Activated CD4-positive, alpha-beta memory T cell treated with anti-CD3 and anti-CD28 coated beads for 36 hours (primary cell): ENCODE measurements at regions of chr17 and their contacts with region 1.

Region 1: GRCh38 chr17:47649153-47649971 is at the start of gene KPNB1:
- DNase-seq: peak; percentile 100
- H3K4me3 Mint-ChIP-seq: peak within 1 kb of the TSS; percentile 92
- H3K27ac Mint-ChIP-seq: peak within 1 kb of the TSS; percentile 98
- H3K4me1 Mint-ChIP-seq: peaks cover 44% of the 10 kb centered on the region
- H3K27me3 Mint-ChIP-seq: no peaks in the 10 kb centered on the region
- total RNA-seq, gene KPNB1: 475 to 488 TPM

Region 2: DNA sequence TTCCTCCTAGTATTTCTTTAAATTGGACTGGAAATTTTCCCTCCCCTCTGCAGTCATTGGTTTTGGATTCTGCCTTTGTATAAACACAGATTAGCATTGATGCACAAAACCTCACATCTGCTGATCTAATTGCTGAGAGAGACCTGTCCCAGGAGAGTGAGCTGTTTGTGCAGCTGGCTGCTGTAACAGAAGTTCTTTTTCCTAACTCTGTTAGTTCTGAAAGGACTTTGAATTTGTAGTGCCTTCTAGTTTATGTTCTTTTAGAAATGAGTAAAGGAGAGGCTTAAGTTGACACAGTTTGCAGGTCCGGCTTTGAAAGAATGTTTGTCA is 44.8 kb before region 1 on chr17:
- CTCF ChIA-PET with region 1: no interaction called
- POLR2A ChIA-PET with region 1: no interaction called
- intact Hi-C with region 1: no loop called
- DNase-seq: no peak
- H3K4me3 Mint-ChIP-seq: no peak overlapping the region
- H3K27ac Mint-ChIP-seq: no peak overlapping the region
- H3K4me1 Mint-ChIP-seq: peaks cover 2% of the 10 kb centered on the region
- H3K27me3 Mint-ChIP-seq: no peaks in the 10 kb centered on the region

Region 3: GRCh38 chr17:47708863-47709541 is 59.6 kb after region 1 on chr17:
- CTCF ChIA-PET with region 1: interaction called, 3 read pairs
- POLR2A ChIA-PET with region 1: interaction called, 6 read pairs
- intact Hi-C with region 1: loop called (anchors 1 kb)
- DNase-seq: no peak
- H3K4me3 Mint-ChIP-seq: no peak overlapping the region
- H3K27ac Mint-ChIP-seq: no peak overlapping the region
- H3K4me1 Mint-ChIP-seq: peaks cover 62% of the 10 kb centered on the region
- H3K27me3 Mint-ChIP-seq: no peaks in the 10 kb centered on the region

Region 4: DNA sequence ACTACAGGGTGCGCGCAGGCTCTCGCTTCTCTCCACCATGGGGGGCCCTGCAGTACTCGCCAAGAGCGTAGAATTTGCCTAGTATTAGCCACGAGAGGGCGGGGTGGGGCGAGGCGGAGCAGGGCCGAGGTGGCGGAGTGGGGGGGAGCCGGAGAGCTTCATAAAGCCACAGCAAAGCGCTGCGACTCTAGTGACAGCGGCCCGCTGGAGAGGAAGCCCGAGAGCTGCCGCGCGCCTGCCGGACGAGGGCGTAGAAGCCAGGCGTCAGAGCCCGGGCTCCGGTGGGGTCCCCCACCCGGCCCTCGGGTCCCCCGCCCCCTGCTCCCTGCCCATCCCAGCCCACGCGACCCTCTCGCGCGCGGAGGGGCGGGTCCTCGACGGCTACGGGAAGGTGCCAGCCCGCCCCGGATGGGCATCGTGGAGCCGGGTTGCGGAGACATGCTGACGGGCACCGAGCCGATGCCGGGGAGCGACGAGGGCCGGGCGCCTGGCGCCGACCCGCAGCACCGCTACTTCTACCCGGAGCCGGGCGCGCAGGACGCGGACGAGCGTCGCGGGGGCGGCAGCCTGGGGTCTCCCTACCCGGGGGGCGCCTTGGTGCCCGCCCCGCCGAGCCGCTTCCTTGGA is 83.8 kb after region 1 on chr17 and contains the start of gene TBX21:
- CTCF ChIA-PET with region 1: interaction called, 6 read pairs
- POLR2A ChIA-PET with region 1: interaction called, 21 read pairs
- intact Hi-C with region 1: no loop called
- DNase-seq: peak; percentile 94
- H3K4me3 Mint-ChIP-seq: peak within 1 kb of the TSS; percentile 100
- H3K27ac Mint-ChIP-seq: peak within 1 kb of the TSS; percentile 93
- H3K4me1 Mint-ChIP-seq: peaks cover 69% of the 10 kb centered on the region
- H3K27me3 Mint-ChIP-seq: no peaks in the 10 kb centered on the region
- total RNA-seq, gene TBX21: 57.7 to 58.2 TPM

Region 5: GRCh38 chr17:47751471-47751870 is 102.1 kb after region 1 on chr17:
- CTCF ChIA-PET with region 1: no interaction called
- POLR2A ChIA-PET with region 1: no interaction called
- intact Hi-C with region 1: no loop called
- DNase-seq: no peak
- H3K4me3 Mint-ChIP-seq: no peak overlapping the region
- H3K27ac Mint-ChIP-seq: no peak overlapping the region
- H3K4me1 Mint-ChIP-seq: peaks cover 2% of the 10 kb centered on the region
- H3K27me3 Mint-ChIP-seq: no peaks in the 10 kb centered on the region

Region 6: DNA sequence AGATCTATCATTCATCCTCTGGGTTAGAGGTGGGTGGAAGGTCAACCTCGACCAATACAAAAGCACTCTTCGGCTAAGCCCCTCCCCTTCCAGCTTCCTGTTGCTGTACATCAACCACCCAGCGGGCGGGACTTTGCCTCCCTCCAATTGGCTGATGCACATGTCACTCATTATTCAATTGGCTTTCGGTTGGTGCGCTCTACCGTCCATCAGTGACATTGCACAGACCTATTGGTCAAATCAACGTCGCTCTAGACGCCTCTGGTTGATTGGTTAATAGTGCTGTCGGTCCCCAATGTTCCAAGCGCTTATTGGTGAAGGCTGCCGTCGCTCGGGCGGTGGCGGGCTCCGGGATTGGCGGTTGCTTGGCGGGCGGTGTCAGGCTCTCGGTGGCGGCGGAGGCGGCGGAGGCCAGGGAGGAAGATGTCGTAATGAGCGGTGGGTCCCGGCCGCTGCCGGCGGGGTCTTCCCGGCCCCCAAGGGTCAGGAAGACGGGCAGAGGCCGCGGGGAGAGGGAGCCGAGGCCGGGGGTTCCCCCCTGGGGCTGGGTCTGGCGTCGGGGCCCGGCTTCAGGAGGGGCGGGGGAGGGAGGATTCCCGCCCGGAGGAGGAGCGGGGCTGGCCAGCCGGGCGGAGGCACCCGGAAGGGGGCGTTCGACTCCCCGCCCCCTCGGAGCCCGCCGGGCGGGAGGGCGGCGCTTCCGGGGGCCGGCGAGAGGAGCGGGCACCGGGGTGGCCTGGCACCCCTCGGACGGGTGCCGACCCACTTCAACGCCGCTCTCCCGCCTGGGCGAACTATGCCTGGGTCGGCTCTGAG is 246.7 kb after region 1 on chr17 and contains the start of gene SP2:
- CTCF ChIA-PET with region 1: no interaction called
- POLR2A ChIA-PET with region 1: interaction called, 5 read pairs
- intact Hi-C with region 1: loop called (anchors 1 kb)
- DNase-seq: peak; percentile 100
- H3K4me3 Mint-ChIP-seq: peak within 1 kb of the TSS; percentile 95
- H3K27ac Mint-ChIP-seq: peak within 1 kb of the TSS; percentile 87
- H3K4me1 Mint-ChIP-seq: peaks cover 34% of the 10 kb centered on the region
- H3K27me3 Mint-ChIP-seq: no peaks in the 10 kb centered on the region
- total RNA-seq, gene SP2: 15.1 to 17.2 TPM